Activated CD4-positive, alpha-beta T cell treated with anti-CD3 and anti-CD28 coated beads, Interleukin-2, amount 10 ng/mL, durations not matched to agents 24 days and 14 days (primary cell): ENCODE measurements at regions of chr1 and their contacts with region 1.

Region 1: GRCh38 chr1:84753516-84754385 is 63.5 kb upstream of the SSX2IP start:
- DNase-seq: peak; percentile 92
- H3K4me3 Mint-ChIP-seq: no peak overlapping the region
- H3K27ac Mint-ChIP-seq: no peak overlapping the region
- H3K4me1 Mint-ChIP-seq: peaks cover 3% of the 10 kb centered on the region
- H3K27me3 Mint-ChIP-seq: peaks cover 31% of the 10 kb centered on the region

Region 2: DNA sequence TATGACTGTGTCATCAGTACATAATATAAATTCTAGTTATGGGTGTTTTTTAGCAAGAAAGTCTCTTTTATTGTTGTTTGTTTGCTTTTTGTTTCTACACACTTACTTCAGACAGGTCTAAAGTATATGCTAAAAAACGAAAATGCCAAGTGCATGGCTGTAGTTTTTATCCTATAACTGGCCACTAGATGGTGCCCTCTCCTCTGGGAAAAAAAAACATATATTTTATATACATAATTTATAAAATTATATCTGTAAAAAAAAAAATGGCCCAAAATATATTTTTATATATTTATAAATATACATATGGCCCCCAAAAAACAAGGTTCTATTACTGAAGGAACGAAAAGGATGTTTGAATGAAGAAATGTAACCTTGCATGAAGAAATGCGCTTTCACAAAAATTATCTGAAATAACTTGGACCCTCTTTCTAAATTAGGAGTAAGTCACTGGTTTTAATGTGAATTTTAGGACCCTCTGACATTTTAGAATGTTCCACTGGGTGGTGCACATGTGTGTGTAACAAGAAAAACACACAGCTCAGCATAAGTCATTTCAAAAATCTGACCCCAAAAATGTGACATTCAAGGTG is 848.3 kb before region 1 on chr1:
- intact Hi-C with region 1: loop called (anchors 5 kb)
- DNase-seq: peak; percentile 69
- H3K4me3 Mint-ChIP-seq: no peak overlapping the region
- H3K27ac Mint-ChIP-seq: no peak overlapping the region
- H3K4me1 Mint-ChIP-seq: no peaks in the 10 kb centered on the region
- H3K27me3 Mint-ChIP-seq: peaks cover 19% of the 10 kb centered on the region

Region 3: GRCh38 chr1:84298328-84298683 is 455.4 kb before region 1 on chr1:
- intact Hi-C with region 1: loop called (anchors 10 kb)
- DNase-seq: peak; percentile 88
- H3K4me3 Mint-ChIP-seq: peak overlapping the region; percentile 91
- H3K27ac Mint-ChIP-seq: peak overlapping the region; percentile 85
- H3K4me1 Mint-ChIP-seq: peaks cover 33% of the 10 kb centered on the region
- H3K27me3 Mint-ChIP-seq: peaks cover 13% of the 10 kb centered on the region

Region 4: DNA sequence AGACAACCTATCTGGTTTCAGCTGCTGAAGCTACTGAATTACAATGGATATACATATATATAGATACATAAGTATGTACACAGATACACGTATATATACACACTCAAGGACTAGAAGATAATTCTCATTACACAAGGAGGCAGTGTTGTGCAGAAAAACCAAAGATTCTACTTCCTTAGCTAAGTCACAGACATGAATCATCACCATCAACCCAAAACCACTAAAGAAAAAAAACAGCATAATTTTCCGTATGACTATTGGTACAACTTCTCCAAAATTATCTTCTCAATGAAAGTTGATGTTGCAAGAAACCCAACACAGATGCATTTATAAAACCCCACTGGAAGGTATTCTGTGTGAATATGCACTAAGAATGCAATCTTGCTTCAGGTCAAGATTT is 311.5 kb before region 1 on chr1:
- intact Hi-C with region 1: loop called (anchors 1 kb)
- DNase-seq: peak; percentile 80
- H3K4me3 Mint-ChIP-seq: peak overlapping the region; percentile 28
- H3K27ac Mint-ChIP-seq: peak overlapping the region; percentile 69
- H3K4me1 Mint-ChIP-seq: peaks cover 16% of the 10 kb centered on the region
- H3K27me3 Mint-ChIP-seq: peaks cover 15% of the 10 kb centered on the region

Region 5: DNA sequence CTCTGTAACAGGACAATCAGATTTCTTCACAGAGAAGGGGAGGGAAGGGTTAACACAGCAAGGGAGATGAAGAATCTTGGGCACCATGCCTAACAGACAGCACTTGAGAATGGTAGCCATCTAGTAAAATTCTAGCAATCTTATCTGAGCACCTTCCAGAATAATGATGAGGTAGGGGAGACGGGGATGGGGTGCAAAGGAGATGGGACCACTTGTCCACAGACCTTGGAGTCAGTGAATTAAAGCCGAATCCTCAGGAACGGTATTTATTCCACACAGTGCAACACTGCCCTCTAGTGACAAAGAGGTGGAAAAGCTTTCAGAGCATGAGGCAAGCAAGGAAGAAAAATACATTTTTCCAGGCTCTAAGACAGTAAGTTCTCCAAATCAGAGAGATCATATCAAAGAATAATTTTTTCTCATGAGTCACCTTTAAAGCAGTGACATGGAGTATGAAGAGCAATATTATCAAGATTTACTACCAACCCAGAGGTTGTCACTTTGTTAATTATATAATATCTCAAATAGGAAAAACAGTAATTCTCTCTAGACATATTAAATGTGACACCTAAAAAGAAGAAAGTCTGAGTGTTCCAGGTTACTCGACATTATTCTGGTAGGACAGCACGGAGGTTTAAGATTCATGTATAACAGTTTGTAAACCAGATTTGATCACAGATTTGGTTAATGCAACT is 182.5 kb after region 1 on chr1:
- intact Hi-C with region 1: loop called (anchors 1 kb)
- DNase-seq: peak; percentile 82
- H3K4me3 Mint-ChIP-seq: no peak overlapping the region
- H3K27ac Mint-ChIP-seq: no peak overlapping the region
- H3K4me1 Mint-ChIP-seq: peaks cover 4% of the 10 kb centered on the region
- H3K27me3 Mint-ChIP-seq: no peaks in the 10 kb centered on the region